ACHN (cell line): ENCODE measurements at regions of chr22 and their contacts with region 1.

Region 1: DNA sequence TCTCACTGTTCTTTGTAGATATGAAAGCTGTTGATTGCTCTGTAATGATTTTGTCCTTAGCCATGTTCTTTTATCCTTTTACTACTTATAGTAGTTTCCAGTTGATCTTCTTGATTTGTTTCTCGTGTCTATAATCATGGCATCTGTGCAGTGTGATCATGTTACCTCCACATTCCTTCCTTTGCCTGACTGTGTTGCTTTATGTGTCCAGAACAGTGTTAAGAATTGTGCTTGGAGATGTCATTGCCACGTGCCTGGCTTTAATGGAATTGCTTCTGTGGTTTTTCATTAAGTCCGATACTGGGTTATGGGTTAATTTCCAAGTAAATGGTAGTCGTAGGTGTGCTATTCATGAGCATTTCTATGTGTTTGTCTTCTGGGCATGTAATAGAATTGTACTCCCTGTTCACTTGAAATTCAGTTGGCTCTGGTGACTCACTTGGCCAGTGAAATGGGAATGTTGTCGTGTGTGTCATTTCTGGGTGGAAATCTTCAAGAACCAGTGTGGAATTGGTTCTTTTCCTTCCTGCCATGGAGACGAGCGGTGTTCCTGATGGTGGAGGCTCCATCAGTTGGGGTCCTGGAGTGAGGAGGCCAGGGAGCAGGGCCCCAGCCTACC is 6.8 kb downstream of the GTSE1 start:
- DNase-seq: no peak

Region 2: GRCh38 chr22:46013460-46014416 is 289.7 kb before region 1 on chr22:
- in situ Hi-C with region 1: loop called (anchors 25 kb)
- DNase-seq: peak; percentile 94

Region 3: DNA sequence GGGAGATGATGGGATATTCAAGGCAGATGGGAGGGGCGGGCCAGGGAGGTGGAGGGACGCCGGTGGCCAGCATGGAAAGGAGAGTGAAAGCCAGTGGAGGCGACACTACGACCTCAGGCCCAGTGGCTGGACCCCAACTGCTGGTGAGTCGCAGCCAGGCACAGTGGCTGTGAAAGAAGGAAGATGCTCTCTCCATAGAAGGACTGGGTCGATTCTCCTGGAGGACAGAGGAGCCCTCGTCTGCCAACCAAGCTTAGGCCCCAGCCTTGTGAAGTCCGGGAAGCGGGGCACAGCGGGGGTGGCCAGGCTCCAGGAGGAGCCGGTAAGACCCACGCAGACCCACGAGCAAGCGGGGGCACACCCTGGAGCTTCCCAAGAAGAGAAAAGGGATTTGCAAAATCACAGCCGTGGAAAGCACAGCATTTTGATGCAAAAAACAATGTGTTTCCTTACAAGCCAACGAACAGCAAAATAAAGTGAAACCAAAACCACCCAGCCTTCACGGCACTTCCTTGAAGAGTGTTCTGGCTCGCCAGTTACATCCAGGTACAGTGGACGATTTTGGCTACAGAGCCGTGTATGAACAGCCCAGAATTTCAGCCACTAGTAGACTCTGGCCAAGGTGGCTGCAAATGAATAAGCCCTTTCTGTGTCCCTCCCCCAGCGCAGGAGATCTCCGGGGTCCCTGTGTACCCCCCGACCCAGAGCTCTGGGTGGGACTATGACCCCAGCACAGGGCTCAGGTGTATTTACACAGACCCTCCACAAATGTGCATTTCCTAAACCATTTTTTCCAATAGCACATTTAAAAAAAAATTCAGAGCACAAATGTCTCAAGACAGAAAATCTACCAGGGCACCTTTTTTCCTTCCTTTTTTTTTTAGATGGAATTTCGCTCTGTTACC is 129.0 kb after region 1 on chr22:
- in situ Hi-C with region 1: loop called (anchors 25 kb)
- DNase-seq: no peak

Region 4: GRCh38 chr22:46500201-46500600 is 196.7 kb after region 1 on chr22:
- in situ Hi-C with region 1: no loop called
- DNase-seq: no peak